Activated CD8-positive, alpha-beta T cell treated with anti-CD3 and anti-CD28 coated beads for 36 hours (primary cell): ENCODE measurements at regions of chr17 and their contacts with region 1.

Region 1: GRCh38 chr17:45135192-45135977 is at the start of gene ACBD4:
- DNase-seq: peak; percentile 98
- ATAC-seq: peak; percentile 89
- H3K4me3 Mint-ChIP-seq: peak within 1 kb of the TSS; percentile 88
- H3K27ac Mint-ChIP-seq: peak within 1 kb of the TSS; percentile 86
- H3K4me1 Mint-ChIP-seq: peaks cover 12% of the 10 kb centered on the region
- H3K27me3 Mint-ChIP-seq: no peaks in the 10 kb centered on the region
- CTCF ChIP-seq: peak; percentile 100
- total RNA-seq, gene ACBD4: 12.4 to 12.6 TPM

Region 2: GRCh38 chr17:44919885-44920564 is 215.4 kb before region 1 on chr17:
- CTCF ChIA-PET with region 1: interaction called, 10 read pairs
- POLR2A ChIA-PET with region 1: no interaction called
- intact Hi-C with region 1: no loop called
- DNase-seq: peak; percentile 83
- ATAC-seq: peak; percentile 95
- H3K4me3 Mint-ChIP-seq: no peak overlapping the region
- H3K27ac Mint-ChIP-seq: no peak overlapping the region
- H3K4me1 Mint-ChIP-seq: peaks cover 4% of the 10 kb centered on the region
- H3K27me3 Mint-ChIP-seq: peaks cover 12% of the 10 kb centered on the region
- CTCF ChIP-seq: peak; percentile 27

Region 3: GRCh38 chr17:45067637-45068036 is 67.7 kb before region 1 on chr17:
- CTCF ChIA-PET with region 1: interaction called, 16 read pairs
- POLR2A ChIA-PET with region 1: no interaction called
- intact Hi-C with region 1: no loop called
- DNase-seq: no peak
- ATAC-seq: no peak
- H3K4me3 Mint-ChIP-seq: no peak overlapping the region
- H3K27ac Mint-ChIP-seq: no peak overlapping the region
- H3K4me1 Mint-ChIP-seq: peaks cover 36% of the 10 kb centered on the region
- H3K27me3 Mint-ChIP-seq: no peaks in the 10 kb centered on the region
- CTCF ChIP-seq: no peak

Region 4: GRCh38 chr17:45161019-45161825 is 25.8 kb after region 1 on chr17:
- CTCF ChIA-PET with region 1: interaction called, 352 read pairs
- POLR2A ChIA-PET with region 1: interaction called, 4 read pairs
- intact Hi-C with region 1: no loop called
- DNase-seq: peak; percentile 99
- ATAC-seq: peak; percentile 97
- H3K4me3 Mint-ChIP-seq: peak overlapping the region; percentile 95
- H3K27ac Mint-ChIP-seq: peak overlapping the region; percentile 99
- H3K4me1 Mint-ChIP-seq: peaks cover 39% of the 10 kb centered on the region
- H3K27me3 Mint-ChIP-seq: no peaks in the 10 kb centered on the region
- CTCF ChIP-seq: no peak

Region 5: DNA sequence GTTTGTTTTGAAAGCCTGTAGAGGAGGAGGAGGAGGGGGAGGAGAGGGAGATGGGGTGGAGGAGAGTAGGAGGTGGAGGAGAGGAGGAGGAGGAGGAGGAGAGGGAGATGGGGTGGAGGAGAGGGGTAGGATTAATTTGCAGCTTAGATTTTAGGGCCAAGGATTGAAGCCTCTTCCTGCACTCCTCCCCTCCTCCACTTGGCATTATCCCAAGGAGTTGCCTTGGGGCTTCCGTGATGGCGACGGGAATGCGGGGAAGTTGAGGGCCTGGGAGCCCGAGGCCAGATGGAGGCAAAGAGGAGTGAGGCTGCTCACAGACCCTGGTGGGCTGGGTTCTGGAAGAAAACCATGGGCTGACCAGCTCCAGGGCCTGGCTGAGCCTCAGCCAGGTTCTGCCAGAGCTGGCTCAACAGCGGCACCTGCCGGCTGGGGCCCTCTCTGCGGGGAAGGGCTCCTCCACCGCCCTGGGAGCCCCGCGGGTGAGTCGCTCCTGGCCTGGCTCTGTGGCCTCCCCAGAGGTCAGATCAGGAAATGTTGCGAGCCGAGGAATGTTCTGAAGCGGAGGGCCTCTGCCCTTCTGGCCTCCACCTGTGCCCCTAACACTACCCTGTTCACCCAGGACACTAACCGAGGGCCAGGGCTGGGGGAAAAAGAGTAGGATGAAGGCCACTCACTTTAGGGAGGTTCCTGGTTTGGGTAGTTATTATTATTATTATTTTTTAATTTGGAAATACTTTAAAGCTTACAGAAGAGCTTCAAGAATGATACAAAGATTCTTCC is 62.4 kb after region 1 on chr17:
- CTCF ChIA-PET with region 1: interaction called, 369 read pairs
- POLR2A ChIA-PET with region 1: interaction called, 6 read pairs
- intact Hi-C with region 1: loop called (anchors 1 kb)
- DNase-seq: peak; percentile 91
- ATAC-seq: peak; percentile 100
- H3K4me3 Mint-ChIP-seq: no peak overlapping the region
- H3K27ac Mint-ChIP-seq: no peak overlapping the region
- H3K4me1 Mint-ChIP-seq: peaks cover 5% of the 10 kb centered on the region
- H3K27me3 Mint-ChIP-seq: no peaks in the 10 kb centered on the region
- CTCF ChIP-seq: peak; percentile 99

Region 6: DNA sequence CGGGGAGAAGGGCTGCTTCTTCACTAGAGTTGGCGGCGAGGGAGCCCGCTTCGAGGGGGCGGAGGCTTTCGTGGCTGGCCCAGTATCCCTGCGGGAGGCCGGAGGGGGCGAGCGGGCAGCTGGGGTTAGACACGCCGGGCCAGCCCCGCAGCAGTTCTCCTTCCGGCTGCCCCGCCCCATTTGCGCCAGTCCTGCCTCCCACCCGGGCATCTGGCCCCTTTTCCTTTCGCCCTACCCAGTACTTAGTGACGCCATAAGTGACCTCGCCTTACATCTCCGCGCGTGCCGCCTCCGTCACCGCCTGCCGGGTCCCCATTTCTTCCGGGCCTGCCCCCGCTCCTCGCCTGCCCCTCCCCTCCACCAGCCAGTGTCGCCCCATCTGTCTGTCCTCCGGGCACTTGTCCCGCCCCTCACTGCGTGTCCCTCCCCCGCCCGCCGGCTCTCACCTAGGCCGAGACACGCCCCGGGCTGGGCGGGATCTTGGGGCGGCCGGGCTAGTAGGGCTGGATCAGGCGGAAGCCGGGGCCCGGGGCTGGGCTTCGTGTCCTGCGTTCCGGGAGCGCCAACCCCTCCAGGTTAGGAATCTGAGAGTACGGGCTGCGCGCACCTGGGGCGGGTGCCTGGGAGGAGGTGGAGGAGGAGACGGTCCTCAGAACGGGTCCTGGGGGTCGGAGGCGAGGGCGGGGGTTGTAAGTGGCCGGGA is 112.2 kb after region 1 on chr17:
- CTCF ChIA-PET with region 1: interaction called, 21 read pairs
- POLR2A ChIA-PET with region 1: no interaction called
- intact Hi-C with region 1: no loop called
- DNase-seq: peak; percentile 100
- ATAC-seq: peak; percentile 91
- H3K4me3 Mint-ChIP-seq: peak overlapping the region; percentile 88
- H3K27ac Mint-ChIP-seq: peak overlapping the region; percentile 91
- H3K4me1 Mint-ChIP-seq: peaks cover 61% of the 10 kb centered on the region
- H3K27me3 Mint-ChIP-seq: no peaks in the 10 kb centered on the region
- CTCF ChIP-seq: no peak